Prostate gland (tissue), 2 donors: ENCODE measurements at regions of chr14 and their contacts with region 1.

Region 1: DNA sequence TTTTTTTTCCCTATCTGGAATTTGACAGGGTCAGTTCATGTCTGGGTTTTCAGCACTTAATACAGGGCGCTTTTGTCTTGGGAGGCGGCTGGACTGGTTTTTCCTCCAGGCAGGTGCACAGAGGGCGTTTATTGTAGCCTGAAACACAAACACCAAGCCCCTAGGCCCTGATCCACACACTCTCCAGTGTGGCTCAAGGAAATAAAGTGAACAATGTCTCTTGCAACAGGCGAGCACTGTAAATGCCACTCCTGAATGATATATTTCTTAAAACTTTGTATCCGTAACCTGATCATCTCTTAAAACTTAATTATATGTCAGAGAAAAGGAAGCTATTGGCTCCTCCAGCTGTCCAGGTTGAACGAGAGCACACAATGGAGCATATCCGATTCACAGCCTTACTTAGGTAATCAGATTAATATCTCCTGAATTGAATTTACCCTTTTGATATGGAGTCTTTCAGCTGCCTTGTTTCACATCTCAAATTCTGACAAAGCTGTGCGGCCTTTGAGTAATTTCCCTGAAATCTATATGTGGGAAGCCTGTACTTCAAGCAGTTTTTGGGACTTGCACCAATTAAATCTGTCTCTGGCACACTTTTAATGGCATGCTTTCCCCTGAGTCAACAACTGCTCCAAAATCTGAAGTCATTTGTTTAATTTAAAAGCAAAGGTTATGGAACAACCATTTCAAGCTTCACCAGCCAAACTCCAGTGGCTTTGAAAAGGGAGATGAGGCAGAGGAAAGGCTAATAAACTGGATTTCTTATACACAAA is 485.7 kb downstream of the ZFP36L1 start:
- DNase-seq: peak; percentile 88
- H3K4me3 ChIP-seq: no peak overlapping the region
- H3K27ac ChIP-seq: peak overlapping the region; percentile 66 to 71
- H3K4me1 ChIP-seq: peaks cover 15% of the 10 kb centered on the region
- H3K27me3 ChIP-seq: no peaks in the 10 kb centered on the region
- CTCF ChIP-seq: no peak
- POLR2A ChIP-seq: no peak

Region 2: GRCh38 chr14:67934008-67934481 is 373.2 kb before region 1 on chr14:
- intact Hi-C with region 1: no loop called
- DNase-seq: peak; percentile 59
- H3K4me3 ChIP-seq: no peak overlapping the region
- H3K27ac ChIP-seq: peak overlapping the region; percentile 17 to 55
- H3K4me1 ChIP-seq: no peaks in the 10 kb centered on the region
- H3K27me3 ChIP-seq: no peaks in the 10 kb centered on the region
- CTCF ChIP-seq: peak; percentile 49 to 90 (median 82)
- POLR2A ChIP-seq: no peak

Region 3: GRCh38 chr14:68268197-68268596 is 39.0 kb before region 1 on chr14:
- intact Hi-C with region 1: loop called (anchors 5 kb)
- DNase-seq: no peak
- H3K4me3 ChIP-seq: no peak overlapping the region
- H3K27ac ChIP-seq: peak overlapping the region in 1 of 2 donors; percentile 0
- H3K4me1 ChIP-seq: no peaks in the 10 kb centered on the region
- H3K27me3 ChIP-seq: no peaks in the 10 kb centered on the region
- CTCF ChIP-seq: no peak
- POLR2A ChIP-seq: no peak

Region 4: GRCh38 chr14:68451696-68452373 is 144.6 kb after region 1 on chr14:
- intact Hi-C with region 1: no loop called
- DNase-seq: no peak
- H3K4me3 ChIP-seq: no peak overlapping the region
- H3K27ac ChIP-seq: no peak overlapping the region
- H3K4me1 ChIP-seq: no peaks in the 10 kb centered on the region
- H3K27me3 ChIP-seq: no peaks in the 10 kb centered on the region
- CTCF ChIP-seq: no peak
- POLR2A ChIP-seq: no peak